ENCODE measurements at regions of chr1 and their contacts with region 1.

Region 1: GRCh38 chr1:205273551-205273982 is 45.8 kb downstream of the TMCC2 start:
- DNase-seq: peak; percentile 88
- H3K4me3 Mint-ChIP-seq: no peak overlapping the region
- H3K27ac Mint-ChIP-seq: no peak overlapping the region
- H3K4me1 Mint-ChIP-seq: peaks cover 25% of the 10 kb centered on the region
- H3K27me3 Mint-ChIP-seq: peaks cover 6% of the 10 kb centered on the region

Region 2: GRCh38 chr1:205098242-205098641 is 175.3 kb before region 1 on chr1:
- CTCF ChIA-PET with region 1: no interaction called
- POLR2A ChIA-PET with region 1: no interaction called
- DNase-seq: no peak
- H3K4me3 Mint-ChIP-seq: no peak overlapping the region
- H3K27ac Mint-ChIP-seq: no peak overlapping the region
- H3K4me1 Mint-ChIP-seq: no peaks in the 10 kb centered on the region
- H3K27me3 Mint-ChIP-seq: no peaks in the 10 kb centered on the region

Region 3: DNA sequence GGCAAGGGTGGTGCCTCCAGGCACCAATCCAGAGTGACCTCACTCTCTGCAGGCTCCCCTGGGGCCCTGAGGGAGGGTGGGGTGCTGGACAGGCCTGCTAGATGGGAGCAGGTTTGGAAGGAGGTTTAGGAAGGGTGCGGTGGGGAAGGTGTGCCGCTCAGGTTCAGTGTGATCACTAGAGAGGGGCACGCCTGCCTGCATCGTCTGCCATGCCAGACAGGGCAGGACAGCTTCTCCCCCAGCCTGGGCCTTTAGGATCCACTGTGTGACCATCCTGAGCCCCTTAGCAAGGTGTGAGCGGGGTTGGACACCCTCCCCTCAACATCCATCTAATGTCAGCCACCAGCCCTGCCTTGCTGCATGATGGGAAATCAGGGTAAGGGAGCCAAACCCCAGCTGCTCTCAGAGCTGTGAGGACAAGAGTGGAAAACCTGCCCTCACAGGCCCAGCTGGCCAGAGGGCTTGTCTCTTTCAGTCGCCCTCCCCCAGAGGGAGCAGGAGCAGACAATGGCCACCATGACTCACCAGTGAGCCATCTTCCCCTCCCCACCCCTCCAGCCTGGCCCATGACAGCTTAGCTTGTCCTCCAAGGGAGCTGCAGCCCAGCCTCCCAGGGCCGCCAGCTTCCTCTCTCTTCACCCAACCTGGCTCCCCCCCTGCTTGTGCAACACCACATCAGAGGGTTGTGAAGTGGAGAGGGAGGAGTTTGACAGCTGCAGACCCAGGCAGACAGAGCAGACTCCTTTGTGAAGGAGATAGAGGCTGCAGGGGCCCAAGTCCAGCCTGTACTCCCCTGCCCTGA is 11.0 kb after region 1 on chr1:
- CTCF ChIA-PET with region 1: interaction called, 132 read pairs
- POLR2A ChIA-PET with region 1: interaction called, 83 read pairs
- DNase-seq: peak; percentile 93
- H3K4me3 Mint-ChIP-seq: peak overlapping the region; percentile 77
- H3K27ac Mint-ChIP-seq: peak overlapping the region; percentile 91
- H3K4me1 Mint-ChIP-seq: peaks cover 83% of the 10 kb centered on the region
- H3K27me3 Mint-ChIP-seq: peaks cover 17% of the 10 kb centered on the region

Region 4: DNA sequence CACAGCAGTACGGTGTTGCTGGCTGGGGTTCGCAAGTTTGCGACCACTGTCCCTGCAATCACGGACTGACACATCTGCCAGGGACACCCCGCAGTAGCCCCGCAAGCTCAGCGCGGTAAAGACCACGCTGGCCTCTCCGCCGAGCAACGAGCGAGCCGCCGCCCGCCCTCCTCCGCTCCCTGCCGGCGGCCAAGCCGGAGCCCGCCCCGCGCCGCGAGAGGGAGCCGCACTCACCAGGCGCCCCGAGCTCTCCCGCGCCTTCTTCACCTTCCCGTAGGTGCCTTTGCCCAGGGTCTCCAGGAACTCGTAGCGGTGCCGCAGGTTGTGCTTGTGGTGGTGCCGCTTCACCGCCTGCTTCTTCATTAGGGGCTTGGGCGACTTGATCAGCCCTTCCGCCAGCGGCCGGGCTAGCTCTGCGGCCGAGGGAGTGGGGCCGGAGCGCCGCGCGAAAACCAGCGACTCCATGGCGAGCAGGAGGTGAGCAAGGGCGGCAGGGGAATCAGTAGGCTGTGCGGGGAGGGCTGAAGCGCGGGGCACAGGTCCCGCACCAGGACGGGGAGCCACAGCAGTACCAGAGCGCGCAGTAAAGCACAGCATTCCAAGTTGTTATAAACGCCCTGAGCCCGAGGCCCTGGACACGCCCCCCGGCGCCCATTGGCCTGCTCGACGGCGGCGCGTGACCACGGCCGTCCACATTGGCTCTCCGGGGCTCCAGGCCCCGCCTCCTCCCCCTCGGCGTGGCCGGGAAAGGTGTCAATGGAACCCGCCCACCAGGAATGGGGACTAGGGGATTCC is 47.8 kb after region 1 on chr1 and contains the start of gene NUAK2:
- CTCF ChIA-PET with region 1: interaction called, 724 read pairs
- POLR2A ChIA-PET with region 1: interaction called, 66 read pairs
- DNase-seq: peak; percentile 80
- H3K4me3 Mint-ChIP-seq: peak within 1 kb of the TSS; percentile 86
- H3K27ac Mint-ChIP-seq: peak within 1 kb of the TSS; percentile 71
- H3K4me1 Mint-ChIP-seq: peaks cover 54% of the 10 kb centered on the region
- H3K27me3 Mint-ChIP-seq: peaks cover 22% of the 10 kb centered on the region
- total RNA-seq, gene NUAK2: 12.4 to 13.0 TPM

Region 5: DNA sequence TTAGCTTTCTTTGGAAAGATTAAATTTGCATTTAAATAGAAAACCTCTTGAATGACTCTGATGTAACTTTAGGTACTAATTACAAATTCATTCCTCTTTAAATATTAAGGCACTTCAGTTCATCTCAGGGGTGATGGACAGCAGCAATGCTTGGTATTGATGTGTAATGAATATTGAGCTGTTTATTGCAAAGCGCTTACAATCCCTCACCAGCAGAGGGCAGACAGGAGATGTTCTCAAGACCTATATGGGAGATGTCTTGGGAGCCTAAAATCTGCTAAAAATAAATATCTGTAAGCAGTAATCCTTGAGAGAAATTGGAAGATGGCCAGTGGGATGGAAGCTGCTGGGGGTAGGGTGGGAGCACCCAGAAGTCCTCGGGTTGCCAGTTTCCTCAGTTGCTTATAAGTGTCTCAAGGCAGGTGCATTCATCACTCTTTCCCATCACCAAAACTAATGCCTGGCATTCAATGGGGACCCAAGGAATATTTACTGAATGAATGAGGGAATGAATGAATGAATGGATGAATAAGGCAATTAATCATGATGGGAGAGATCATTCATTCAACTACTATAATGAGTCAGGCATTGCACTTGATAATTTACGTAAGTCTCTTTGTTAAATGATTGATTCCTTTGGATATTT is 80.8 kb after region 1 on chr1:
- CTCF ChIA-PET with region 1: interaction called, 24 read pairs
- POLR2A ChIA-PET with region 1: interaction called, 3 read pairs
- DNase-seq: peak; percentile 67
- H3K4me3 Mint-ChIP-seq: no peak overlapping the region
- H3K27ac Mint-ChIP-seq: no peak overlapping the region
- H3K4me1 Mint-ChIP-seq: no peaks in the 10 kb centered on the region
- H3K27me3 Mint-ChIP-seq: peaks cover 21% of the 10 kb centered on the region

Region 6: DNA sequence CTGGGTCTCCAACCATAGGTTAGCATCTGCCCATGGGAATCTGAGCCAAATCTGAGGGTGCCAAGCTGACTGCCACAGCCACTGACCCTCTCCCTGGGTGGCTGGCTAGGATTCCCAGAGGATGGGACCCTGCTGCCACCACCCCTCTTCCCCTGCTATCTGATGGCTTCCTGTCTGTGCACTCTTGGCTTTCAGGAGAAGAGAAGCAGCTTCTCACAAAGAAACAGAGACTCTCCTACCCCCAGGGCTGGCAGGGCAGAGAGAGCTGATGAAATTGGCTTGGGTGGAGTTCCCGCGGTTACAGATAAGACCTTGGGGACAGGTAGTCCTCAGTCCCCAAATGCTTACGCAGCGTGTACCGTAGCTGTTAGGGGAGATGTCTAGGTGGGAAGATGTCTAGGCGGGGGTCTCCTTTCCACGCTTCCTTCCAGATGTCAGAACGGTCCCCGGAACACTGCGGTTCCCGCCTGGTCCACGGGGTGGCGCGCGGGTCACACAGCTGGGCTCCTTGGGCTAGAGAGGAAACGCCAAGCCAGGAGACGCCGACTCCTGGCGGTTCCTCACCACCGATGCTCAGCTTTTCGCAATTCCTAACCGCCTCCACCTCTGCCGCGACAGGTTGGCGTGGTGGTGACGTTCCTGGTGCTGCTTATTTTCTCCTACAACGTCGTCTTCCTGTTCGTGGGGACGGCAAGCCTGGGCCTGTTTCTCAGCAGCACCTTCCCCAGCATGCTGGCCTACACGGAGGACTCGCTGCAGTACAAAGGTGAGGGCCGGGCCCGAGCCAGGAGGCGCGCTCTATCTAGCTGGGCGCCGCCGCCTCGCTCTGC is 318.2 kb after region 1 on chr1:
- CTCF ChIA-PET with region 1: no interaction called
- POLR2A ChIA-PET with region 1: no interaction called
- DNase-seq: peak; percentile 89
- H3K4me3 Mint-ChIP-seq: peak overlapping the region; percentile 74
- H3K27ac Mint-ChIP-seq: peak overlapping the region; percentile 64
- H3K4me1 Mint-ChIP-seq: peaks cover 44% of the 10 kb centered on the region
- H3K27me3 Mint-ChIP-seq: no peaks in the 10 kb centered on the region

Measured in activated CD4-positive, alpha-beta memory T cell treated with anti-CD3 and anti-CD28 coated beads, Interleukin-2, amount 10 ng/mL, durations not matched to agents 7 days and 5 days (primary cell).